Activated CD8-positive, alpha-beta T cell treated with anti-CD3 and anti-CD28 coated beads for 36 hours (primary cell): ENCODE measurements at regions of chr17 and their contacts with region 1.

Region 1: DNA sequence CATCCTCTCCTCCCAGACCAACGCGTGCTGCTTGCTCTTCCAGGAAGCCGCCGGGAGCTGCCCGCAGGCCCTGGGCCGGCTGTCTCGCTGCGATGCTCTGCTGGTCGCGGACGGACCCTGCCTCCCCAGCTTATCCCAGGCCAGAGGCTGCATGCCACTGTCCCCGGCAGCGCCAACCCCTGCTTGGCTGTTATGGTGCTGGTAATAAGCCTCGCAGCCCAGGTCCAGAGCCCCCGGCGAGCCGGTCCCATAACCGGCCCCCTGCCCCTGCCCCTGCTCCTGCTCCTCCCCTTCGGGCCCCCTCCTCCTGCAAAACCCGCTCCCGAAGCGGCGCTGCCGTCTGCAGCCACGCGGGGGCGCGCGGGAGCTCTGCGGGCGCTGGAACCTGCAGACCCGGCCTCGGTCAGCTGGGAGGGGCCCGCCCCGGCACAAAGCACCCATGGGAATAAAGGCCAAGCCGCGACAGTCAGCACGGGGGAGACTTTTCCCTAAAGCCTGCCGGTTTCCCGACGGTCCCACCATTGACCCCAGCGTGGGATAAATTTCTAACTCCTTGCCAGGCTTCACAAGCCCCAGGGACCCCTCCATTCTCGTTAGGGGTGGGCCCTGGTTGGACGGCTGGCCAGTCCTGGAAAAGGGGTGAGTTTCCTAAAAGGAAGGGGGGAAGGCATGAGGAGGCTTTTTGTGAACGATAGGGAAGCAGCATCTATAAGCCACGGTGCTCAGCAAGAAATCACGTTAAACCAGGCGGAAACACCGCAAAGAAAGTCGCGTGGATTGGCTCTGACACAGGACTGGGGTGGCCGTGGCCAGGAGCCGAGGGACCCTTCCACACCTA is 11.2 kb downstream of the ENPP7 start:
- DNase-seq: peak; percentile 76
- ATAC-seq: peak; percentile 52
- H3K4me3 Mint-ChIP-seq: no peak overlapping the region
- H3K27ac Mint-ChIP-seq: no peak overlapping the region
- H3K4me1 Mint-ChIP-seq: peaks cover 13% of the 10 kb centered on the region
- H3K27me3 Mint-ChIP-seq: peaks cover 27% of the 10 kb centered on the region
- CTCF ChIP-seq: peak; percentile 98

Region 2: DNA sequence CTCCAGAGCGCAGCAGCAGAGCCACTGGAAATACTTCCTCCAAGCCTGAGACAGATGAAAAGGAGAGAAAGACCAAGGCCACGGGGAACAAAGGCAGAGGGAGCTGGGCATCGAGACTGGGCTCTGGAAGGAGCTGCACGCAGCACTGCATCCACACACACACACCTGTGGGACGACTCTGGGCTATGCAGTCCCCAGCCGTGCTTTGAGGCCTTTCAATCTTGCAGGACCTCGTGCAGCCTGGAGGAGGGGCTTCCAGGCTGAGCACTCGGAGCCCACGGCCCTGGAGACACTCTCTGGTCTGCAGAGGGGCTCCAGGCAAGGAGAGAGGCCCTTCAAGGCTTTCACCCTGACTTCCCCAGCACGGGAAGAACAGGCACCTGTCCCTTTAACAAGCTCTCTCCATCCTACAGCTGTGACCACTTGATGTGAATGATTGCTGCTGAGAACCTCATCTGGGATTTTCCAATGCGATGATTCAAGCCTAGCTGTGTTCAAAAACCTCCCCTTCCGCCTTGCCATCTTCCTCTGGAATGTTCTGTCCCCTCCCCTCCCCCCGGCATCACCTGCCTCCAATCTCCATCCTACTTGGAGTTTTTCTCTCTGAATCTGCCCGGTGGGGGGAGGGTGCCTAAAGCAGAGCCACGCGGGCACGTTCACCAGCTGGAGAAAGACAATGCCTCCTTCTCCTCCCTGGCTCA is 168.6 kb before region 1 on chr17:
- CTCF ChIA-PET with region 1: no interaction called
- POLR2A ChIA-PET with region 1: no interaction called
- intact Hi-C with region 1: no loop called
- DNase-seq: no peak
- ATAC-seq: no peak
- H3K4me3 Mint-ChIP-seq: no peak overlapping the region
- H3K27ac Mint-ChIP-seq: no peak overlapping the region
- H3K4me1 Mint-ChIP-seq: no peaks in the 10 kb centered on the region
- H3K27me3 Mint-ChIP-seq: peaks cover 5% of the 10 kb centered on the region
- CTCF ChIP-seq: no peak

Region 3: DNA sequence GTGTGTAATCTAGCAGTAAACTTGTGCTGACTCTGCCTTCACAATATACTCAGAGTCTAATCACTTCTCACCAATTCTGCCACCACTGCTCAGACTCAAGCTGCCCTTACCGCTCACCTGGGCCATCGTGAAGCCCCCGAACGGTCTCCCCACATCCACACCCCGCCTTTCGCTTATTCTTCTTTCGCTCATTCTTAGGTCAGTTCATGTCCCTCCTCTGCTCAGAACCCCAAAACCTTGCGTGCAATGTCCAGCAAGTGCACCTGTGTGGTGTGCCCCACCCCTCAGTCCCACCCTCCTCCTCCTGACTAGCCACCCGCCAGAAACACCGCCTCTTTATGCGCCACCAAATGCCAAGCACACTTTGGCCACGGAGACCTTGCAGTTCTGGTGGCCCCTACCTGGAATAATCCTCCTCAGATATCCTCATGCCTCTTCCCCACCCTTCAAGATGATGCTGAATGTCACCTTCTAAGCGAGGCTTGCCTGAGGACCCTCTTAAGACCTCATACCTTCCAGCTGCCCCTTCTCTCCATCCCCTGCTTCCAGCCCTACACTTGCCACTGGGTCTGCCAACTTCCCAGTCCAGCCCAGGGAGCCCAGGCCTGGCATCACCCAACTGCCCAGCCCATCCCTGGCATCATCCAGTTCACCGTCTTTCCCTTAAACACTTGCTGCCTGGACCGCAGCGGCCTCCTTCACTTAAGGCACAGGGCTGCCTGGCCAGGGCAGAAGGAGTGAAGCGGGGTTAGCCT is 96.8 kb before region 1 on chr17:
- CTCF ChIA-PET with region 1: no interaction called
- POLR2A ChIA-PET with region 1: no interaction called
- intact Hi-C with region 1: no loop called
- DNase-seq: no peak
- ATAC-seq: no peak
- H3K4me3 Mint-ChIP-seq: no peak overlapping the region
- H3K27ac Mint-ChIP-seq: no peak overlapping the region
- H3K4me1 Mint-ChIP-seq: no peaks in the 10 kb centered on the region
- H3K27me3 Mint-ChIP-seq: peaks cover 11% of the 10 kb centered on the region
- CTCF ChIP-seq: no peak

Region 4: DNA sequence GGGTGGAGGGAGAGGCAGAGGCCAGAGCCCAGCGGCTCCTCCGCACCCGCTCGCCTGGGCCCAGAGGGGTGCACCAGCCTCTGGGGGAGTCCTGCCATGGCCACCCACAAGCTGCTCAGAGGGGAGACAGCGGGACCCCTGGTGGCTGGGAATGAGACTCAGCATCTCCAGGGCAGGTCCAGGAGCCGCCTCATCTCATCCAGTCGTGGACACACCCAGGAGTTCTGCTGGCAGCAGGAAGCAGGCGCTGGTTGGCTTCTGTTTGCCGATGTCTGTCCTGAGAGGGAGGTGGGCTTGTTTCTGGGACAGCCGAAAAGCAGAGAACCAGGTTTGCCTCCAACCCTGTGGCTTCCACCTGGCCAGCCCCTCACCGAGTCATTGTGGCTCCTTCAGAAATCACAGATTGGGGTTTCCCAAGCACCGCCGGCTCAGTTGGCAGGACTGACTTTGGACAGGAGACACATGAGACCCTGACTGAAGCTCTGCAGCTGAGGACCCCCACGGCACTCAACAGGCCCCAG is 60.8 kb before region 1 on chr17:
- CTCF ChIA-PET with region 1: no interaction called
- POLR2A ChIA-PET with region 1: no interaction called
- intact Hi-C with region 1: no loop called
- DNase-seq: no peak
- ATAC-seq: no peak
- H3K4me3 Mint-ChIP-seq: no peak overlapping the region
- H3K27ac Mint-ChIP-seq: no peak overlapping the region
- H3K4me1 Mint-ChIP-seq: no peaks in the 10 kb centered on the region
- H3K27me3 Mint-ChIP-seq: peaks cover 17% of the 10 kb centered on the region
- CTCF ChIP-seq: no peak

Region 5: DNA sequence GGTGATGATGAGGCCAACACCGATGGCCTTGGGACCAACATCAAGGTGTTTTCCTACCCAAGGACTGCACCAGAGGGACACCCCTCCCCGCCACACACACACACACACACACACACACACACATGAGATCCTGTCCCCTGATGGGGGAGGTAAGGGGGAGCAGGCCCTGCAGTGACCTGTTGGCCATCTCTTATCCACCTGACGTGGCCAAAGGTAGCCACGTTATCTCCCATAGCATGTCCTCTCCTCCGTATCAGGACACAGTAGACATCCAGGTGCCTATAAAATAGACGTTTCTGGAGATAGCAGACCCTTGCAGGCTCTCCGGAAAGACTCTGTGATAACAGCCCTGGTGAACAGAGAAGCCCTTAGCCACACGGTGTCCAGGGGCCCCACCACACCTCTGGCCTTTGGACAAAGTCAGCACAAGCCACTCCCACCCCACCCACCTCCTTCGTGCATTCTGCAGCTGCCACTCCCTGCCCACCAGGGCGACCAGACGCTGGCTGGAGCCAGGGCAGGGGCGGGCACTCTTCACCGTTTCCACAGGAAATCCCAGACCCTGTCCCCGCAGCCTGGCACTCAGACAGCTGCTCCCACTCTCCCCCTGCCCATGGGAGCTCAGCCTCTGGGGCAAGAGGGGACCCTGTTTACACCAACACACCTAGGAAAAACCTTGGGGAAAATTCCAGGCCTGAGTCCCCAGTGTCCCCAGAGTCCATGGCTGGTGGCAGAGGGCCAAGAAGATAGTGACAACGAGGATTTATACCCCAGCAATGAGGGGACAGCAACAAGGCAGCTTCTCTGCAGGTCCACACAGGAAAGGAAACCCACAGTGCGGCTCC is 26.6 kb before region 1 on chr17:
- CTCF ChIA-PET with region 1: no interaction called
- POLR2A ChIA-PET with region 1: no interaction called
- intact Hi-C with region 1: no loop called
- DNase-seq: no peak
- ATAC-seq: no peak
- H3K4me3 Mint-ChIP-seq: no peak overlapping the region
- H3K27ac Mint-ChIP-seq: no peak overlapping the region
- H3K4me1 Mint-ChIP-seq: no peaks in the 10 kb centered on the region
- H3K27me3 Mint-ChIP-seq: peaks cover 4% of the 10 kb centered on the region
- CTCF ChIP-seq: no peak

Region 6: DNA sequence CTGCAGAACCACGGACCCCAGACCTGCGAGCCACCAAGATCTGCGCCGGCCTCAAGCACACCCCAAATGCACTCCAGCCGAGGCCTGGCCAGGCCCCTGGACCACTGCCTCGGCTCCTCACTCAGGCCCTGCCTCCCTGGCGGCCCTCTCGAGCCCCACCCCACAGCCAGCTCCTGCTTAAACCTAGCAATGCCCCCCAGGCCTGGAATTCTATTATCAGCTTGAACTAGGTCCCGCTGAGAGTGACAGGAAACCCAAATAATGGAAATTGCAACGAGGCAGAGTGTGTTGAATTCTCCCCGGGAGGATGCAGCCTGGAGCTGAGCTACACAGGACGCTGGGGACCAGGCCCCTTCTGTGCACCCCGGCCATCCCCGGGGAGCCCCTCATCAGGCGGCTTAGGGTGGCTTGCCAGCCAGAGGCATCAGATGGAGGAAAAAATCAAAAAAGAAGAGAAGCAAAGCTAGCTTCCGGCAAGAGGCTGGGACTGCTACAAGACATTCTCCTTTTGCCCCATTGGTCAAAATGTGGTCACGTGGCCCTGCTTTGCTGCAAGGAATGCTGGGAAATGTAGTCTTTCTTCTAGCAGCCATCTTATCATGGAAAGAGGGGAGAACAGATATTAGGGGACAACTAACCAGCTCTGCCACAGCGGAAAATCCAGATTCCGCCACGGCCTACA is 13.6 kb before region 1 on chr17:
- CTCF ChIA-PET with region 1: interaction called, 18 read pairs
- POLR2A ChIA-PET with region 1: no interaction called
- intact Hi-C with region 1: no loop called
- DNase-seq: peak; percentile 93
- ATAC-seq: peak; percentile 93
- H3K4me3 Mint-ChIP-seq: peak overlapping the region; percentile 68
- H3K27ac Mint-ChIP-seq: peak overlapping the region; percentile 81
- H3K4me1 Mint-ChIP-seq: peaks cover 12% of the 10 kb centered on the region
- H3K27me3 Mint-ChIP-seq: no peaks in the 10 kb centered on the region
- CTCF ChIP-seq: no peak

Region 7: GRCh38 chr17:79752175-79752574 is 10.2 kb after region 1 on chr17:
- CTCF ChIA-PET with region 1: interaction called, 15 read pairs
- POLR2A ChIA-PET with region 1: no interaction called
- intact Hi-C with region 1: no loop called
- DNase-seq: peak; percentile 65
- ATAC-seq: peak; percentile 70
- H3K4me3 Mint-ChIP-seq: peak overlapping the region; percentile 17
- H3K27ac Mint-ChIP-seq: no peak overlapping the region
- H3K4me1 Mint-ChIP-seq: peaks cover 10% of the 10 kb centered on the region
- H3K27me3 Mint-ChIP-seq: peaks cover 32% of the 10 kb centered on the region
- CTCF ChIP-seq: no peak

Region 8: GRCh38 chr17:79991140-79991923 is 249.4 kb after region 1 on chr17:
- CTCF ChIA-PET with region 1: interaction called, 5 read pairs
- POLR2A ChIA-PET with region 1: no interaction called
- intact Hi-C with region 1: loop called (anchors 10 kb)
- DNase-seq: peak; percentile 91
- ATAC-seq: peak; percentile 76
- H3K4me3 Mint-ChIP-seq: peak overlapping the region; percentile 80
- H3K27ac Mint-ChIP-seq: no peak overlapping the region
- H3K4me1 Mint-ChIP-seq: peaks cover 36% of the 10 kb centered on the region
- H3K27me3 Mint-ChIP-seq: no peaks in the 10 kb centered on the region
- CTCF ChIP-seq: peak; percentile 49